ENCODE measurements at regions of chr16 and their contacts with region 1.

Region 1: GRCh38 chr16:75251280-75252048 is at the start of gene BCAR1:
- DNase-seq: peak; percentile 80 to 92 (median 86)
- H3K4me3 ChIP-seq: peak within 1 kb of the TSS; percentile 52 to 94 (median 83)
- H3K27ac ChIP-seq: peak within 1 kb of the TSS; percentile 79 to 100 (median 99)
- H3K27me3 ChIP-seq: no peaks in the 10 kb centered on the region
- CTCF ChIP-seq: peak in 47 of 56 donors; percentile 7 to 65 (median 33)
- total RNA-seq, gene BCAR1: 67.8 to 163 (median 96.2) TPM

Region 2: DNA sequence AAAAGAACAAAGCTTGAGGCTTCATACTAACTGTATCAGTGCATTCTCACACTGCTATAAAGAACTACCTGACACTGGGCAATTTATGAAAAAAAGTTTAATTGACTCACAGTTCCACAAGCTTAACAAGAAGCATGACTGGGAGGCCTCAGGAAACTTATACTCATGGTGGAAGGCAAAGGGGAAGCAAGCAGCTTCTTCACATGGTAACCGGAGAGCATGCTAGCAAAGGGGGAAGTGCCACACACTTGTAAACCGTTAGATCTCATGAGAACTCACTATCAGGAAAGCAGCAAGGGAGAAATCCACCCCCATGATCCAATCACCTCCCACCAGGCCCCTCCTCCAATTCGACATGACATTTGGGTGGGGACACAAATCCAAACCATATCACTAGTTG is 69.8 kb before region 1 on chr16:
- intact Hi-C with region 1: no loop called
- DNase-seq: no peak
- H3K4me3 ChIP-seq: no peak overlapping the region
- H3K27ac ChIP-seq: no peak overlapping the region
- H3K27me3 ChIP-seq: no peaks in the 10 kb centered on the region
- CTCF ChIP-seq: no peak

Region 3: GRCh38 chr16:75265845-75266701 is 14.6 kb after region 1 on chr16:
- intact Hi-C with region 1: loop called in 1 of 2 experiments (anchors 2 kb)
- DNase-seq: peak; percentile 55 to 86 (median 72)
- H3K4me3 ChIP-seq: peak overlapping the region; percentile 62 to 99 (median 94)
- H3K27ac ChIP-seq: peak overlapping the region; percentile 63 to 98 (median 94)
- H3K27me3 ChIP-seq: no peaks in the 10 kb centered on the region
- CTCF ChIP-seq: peak in 6 of 56 donors; percentile 6 to 14 (median 12)

Region 4: GRCh38 chr16:75311383-75311938 is 60.0 kb after region 1 on chr16:
- intact Hi-C with region 1: loop called in 1 of 2 experiments (anchors 5 kb)
- DNase-seq: no peak
- H3K4me3 ChIP-seq: no peak overlapping the region
- H3K27ac ChIP-seq: peak overlapping the region in 43 of 59 donors; percentile 2 to 95 (median 82)
- H3K27me3 ChIP-seq: no peaks in the 10 kb centered on the region
- CTCF ChIP-seq: no peak

Region 5: GRCh38 chr16:75379911-75380847 is 128.7 kb after region 1 on chr16:
- intact Hi-C with region 1: loop called in 1 of 2 experiments (anchors 5 kb)
- DNase-seq: no peak
- H3K4me3 ChIP-seq: no peak overlapping the region
- H3K27ac ChIP-seq: peak overlapping the region in 24 of 59 donors; percentile 0 to 55 (median 34)
- H3K27me3 ChIP-seq: no peaks in the 10 kb centered on the region
- CTCF ChIP-seq: peak in 1 of 56 donors; percentile 4